CD4-positive, alpha-beta memory T cell (primary cell): ENCODE measurements at regions of chr2 and their contacts with region 1.

Region 1: DNA sequence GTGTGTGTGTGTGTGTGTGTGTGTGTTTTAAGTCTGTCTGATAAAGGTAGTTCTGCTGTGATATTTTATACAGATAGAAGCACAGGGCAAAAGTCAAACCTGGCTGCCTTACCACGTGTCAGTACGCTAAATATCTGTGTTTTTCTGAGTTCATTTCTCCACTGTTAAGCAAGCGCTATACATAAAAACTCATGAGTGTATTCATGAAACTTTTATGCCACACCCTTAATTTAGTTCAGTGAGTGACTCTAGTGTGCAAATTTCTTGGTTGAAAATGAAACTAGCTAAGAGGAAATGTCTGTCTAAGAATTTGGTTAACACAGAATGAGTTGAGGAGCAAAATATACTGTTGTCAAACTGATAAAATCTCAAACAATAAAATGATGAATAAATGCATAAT is 11.2 kb downstream of the CASP10 start:
- DNase-seq: peak in 3 of 5 donors; percentile 29 to 36 (median 32)
- H3K4me3 ChIP-seq: no peak overlapping the region
- H3K4me3 Mint-ChIP-seq: peak overlapping the region; percentile 54 to 93 (median 80)
- H3K27ac ChIP-seq: peak overlapping the region; percentile 41
- H3K27ac Mint-ChIP-seq: peak overlapping the region; percentile 62 to 95 (median 91)
- H3K4me1 ChIP-seq: peaks cover 77% of the 10 kb centered on the region
- H3K4me1 Mint-ChIP-seq: peaks cover 46 to 79% (median 62%) of the 10 kb centered on the region in 4 donors
- H3K27me3 ChIP-seq: no peaks in the 10 kb centered on the region
- H3K27me3 Mint-ChIP-seq: no peaks in the 10 kb centered on the region

Region 2: GRCh38 chr2:201208563-201209252 is 14.6 kb after region 1 on chr2:
- CTCF ChIA-PET with region 1: interaction called, 5 read pairs
- POLR2A ChIA-PET with region 1: interaction called, 11 read pairs
- intact Hi-C with region 1: no loop called
- DNase-seq: no peak
- H3K4me3 ChIP-seq: no peak overlapping the region
- H3K4me3 Mint-ChIP-seq: no peak overlapping the region
- H3K27ac ChIP-seq: no peak overlapping the region
- H3K27ac Mint-ChIP-seq: peak overlapping the region in 2 of 7 donors; percentile 1 to 68
- H3K4me1 ChIP-seq: peaks cover 24% of the 10 kb centered on the region
- H3K4me1 Mint-ChIP-seq: peaks cover 22 to 31% (median 27%) of the 10 kb centered on the region in 4 donors
- H3K27me3 ChIP-seq: no peaks in the 10 kb centered on the region
- H3K27me3 Mint-ChIP-seq: no peaks in the 10 kb centered on the region